ENCODE measurements at regions of chr14 and their contacts with region 1.

Region 1: DNA sequence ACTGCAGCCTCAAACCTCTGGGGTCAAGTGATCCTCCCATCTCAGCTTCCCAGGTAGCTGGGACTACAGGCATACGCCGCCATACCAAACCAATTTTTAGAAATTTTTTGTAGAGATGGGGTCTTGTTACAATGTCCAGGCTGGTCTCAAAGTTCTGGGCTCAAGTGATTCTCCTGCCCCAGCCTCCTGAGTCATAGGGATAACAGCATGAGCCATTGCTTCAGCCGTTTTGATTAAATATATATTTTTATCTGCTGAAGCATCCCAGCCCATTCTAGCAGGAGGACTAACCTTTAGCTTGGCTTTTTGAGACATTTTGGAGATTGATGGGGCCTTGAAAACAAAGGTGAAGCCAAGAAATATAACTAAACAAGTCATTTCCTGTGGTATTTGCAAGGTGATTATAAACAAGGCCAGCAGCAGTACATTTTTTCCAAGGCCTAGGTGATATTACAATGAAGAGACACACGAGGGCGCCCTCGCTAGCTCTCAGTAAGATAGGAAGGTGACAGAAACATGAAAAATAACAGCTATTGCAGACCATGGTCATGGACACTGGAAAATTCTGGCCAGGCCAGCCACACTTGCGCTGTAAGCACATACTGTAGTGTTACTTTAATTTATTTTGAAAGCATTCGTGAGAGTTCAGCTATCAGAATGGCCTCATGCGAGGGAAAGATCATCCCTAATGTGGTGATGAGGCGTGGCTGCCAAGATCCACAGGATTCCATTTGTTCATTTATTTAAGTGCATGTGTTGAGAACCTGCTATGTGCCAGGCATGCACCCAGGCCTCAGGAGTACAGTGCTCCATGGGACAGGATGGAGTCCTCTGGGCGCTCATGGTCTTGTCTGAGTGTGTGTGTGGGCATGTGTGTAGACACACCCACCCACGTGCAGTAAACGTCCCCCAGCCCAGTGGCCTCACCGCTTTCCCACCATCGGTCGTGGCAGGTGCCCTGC is 63.5 kb downstream of the DGLUCY start:
- DNase-seq: peak in 1 of 2 experiments; percentile 66
- H3K4me3 ChIP-seq: no peak overlapping the region
- H3K27ac ChIP-seq: no peak overlapping the region
- H3K4me1 ChIP-seq: no peaks in the 10 kb centered on the region; a peak in 2 of 7 replicates
- H3K27me3 ChIP-seq: no peaks in the 10 kb centered on the region
- CTCF ChIP-seq: peak in 2 of 3 experiments; percentile 63 to 72; a peak in 3 of 4 replicates
- EP300 ChIP-seq: no peak
- POLR2A ChIP-seq: no peak
- RAD21 ChIP-seq: peak; percentile 71 to 81

Region 2: GRCh38 chr14:91098591-91098990 is 78.8 kb before region 1 on chr14:
- CTCF ChIA-PET with region 1: interaction called, 11 read pairs
- POLR2A ChIA-PET with region 1: no interaction called
- DNase-seq: no peak
- H3K4me3 ChIP-seq: no peak overlapping the region
- H3K27ac ChIP-seq: no peak overlapping the region
- H3K4me1 ChIP-seq: no peaks in the 10 kb centered on the region
- H3K27me3 ChIP-seq: no peaks in the 10 kb centered on the region
- CTCF ChIP-seq: no peak
- EP300 ChIP-seq: no peak
- POLR2A ChIP-seq: no peak
- RAD21 ChIP-seq: no peak

Region 3: DNA sequence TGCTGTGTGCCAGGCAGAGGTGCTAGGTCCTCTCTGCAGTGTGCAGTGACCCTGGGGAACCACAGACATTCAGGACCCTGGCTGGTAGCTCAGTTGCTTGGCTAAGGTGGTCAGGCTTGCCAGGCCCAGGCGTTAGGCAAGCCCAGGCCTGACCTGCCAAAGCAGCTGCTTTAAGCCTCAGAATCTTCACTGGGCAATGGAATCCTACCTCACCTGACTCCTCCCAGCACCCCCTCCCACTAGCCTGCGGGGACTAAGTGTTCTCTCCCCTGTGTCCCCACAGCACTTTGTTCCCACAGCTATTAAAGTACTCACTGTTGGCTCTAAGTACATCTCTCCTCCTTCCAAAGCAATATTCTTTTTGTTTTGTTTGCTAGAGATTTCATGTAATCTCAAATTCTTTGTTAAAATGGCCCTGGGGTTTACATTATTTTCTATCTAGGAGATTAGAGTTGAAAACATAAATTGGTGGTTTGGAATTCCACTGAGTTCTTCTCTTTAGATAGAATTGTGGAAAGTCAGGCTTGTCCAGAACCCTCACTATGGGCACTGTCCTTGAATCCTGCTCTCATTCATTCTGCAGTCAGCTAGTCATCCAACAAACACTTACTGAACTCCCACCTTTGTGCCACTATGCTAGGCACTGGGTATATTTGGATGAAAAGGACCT is 19.1 kb before region 1 on chr14:
- CTCF ChIA-PET with region 1: interaction called, 43 read pairs
- POLR2A ChIA-PET with region 1: no interaction called
- DNase-seq: no peak
- H3K4me3 ChIP-seq: no peak overlapping the region
- H3K27ac ChIP-seq: no peak overlapping the region
- H3K4me1 ChIP-seq: no peaks in the 10 kb centered on the region
- H3K27me3 ChIP-seq: no peaks in the 10 kb centered on the region
- CTCF ChIP-seq: no peak
- EP300 ChIP-seq: no peak
- POLR2A ChIP-seq: no peak
- RAD21 ChIP-seq: no peak

Region 4: DNA sequence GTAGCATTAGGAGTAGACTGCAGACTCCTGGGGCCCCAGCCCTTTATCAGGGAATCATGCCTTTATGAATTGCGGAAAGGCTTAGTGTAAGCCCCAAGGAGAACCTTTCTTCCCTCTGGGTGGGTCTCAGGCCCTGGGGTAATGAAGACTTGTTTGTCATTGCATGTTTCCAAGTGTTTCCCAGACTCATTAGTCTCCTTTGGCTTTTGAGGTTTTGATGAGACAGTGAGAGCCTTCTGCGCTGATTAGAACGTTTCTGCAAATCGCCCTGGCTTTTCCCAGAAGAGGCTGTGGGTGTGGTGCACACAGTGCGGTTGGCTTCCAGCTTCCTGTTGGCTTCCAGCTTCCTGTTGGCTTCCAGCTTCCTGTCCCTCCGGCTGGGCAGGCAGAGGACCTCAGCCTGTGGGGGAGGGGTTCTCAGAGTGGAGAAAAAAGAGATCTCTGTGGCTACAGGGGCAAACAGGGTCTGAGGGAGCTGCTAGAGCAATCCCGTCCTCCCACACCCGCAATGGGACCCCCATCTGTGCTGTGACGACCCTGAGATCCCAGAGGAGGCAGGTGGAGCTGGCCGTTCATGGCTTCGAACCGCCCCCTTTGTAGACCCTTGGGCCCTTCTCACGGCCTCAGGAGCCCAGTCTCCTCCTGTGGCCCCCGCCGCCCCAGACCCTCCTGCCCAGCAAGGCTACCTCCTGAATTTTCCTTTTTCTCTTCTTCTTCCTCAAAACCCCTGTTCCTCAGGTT is 25.1 kb after region 1 on chr14:
- CTCF ChIA-PET with region 1: interaction called, 14 read pairs
- POLR2A ChIA-PET with region 1: no interaction called
- DNase-seq: no peak
- H3K4me3 ChIP-seq: no peak overlapping the region
- H3K27ac ChIP-seq: no peak overlapping the region
- H3K4me1 ChIP-seq: no peaks in the 10 kb centered on the region
- H3K27me3 ChIP-seq: no peaks in the 10 kb centered on the region
- CTCF ChIP-seq: no peak
- EP300 ChIP-seq: no peak
- POLR2A ChIP-seq: no peak
- RAD21 ChIP-seq: no peak

Region 5: GRCh38 chr14:91264151-91265150 is 87.1 kb after region 1 on chr14:
- CTCF ChIA-PET with region 1: interaction called, 57 read pairs
- POLR2A ChIA-PET with region 1: no interaction called
- DNase-seq: peak in 1 of 2 experiments; percentile 71
- H3K4me3 ChIP-seq: peak overlapping the region; percentile 39 to 64 (median 54)
- H3K27ac ChIP-seq: no peak overlapping the region
- H3K4me1 ChIP-seq: peaks cover 0 to 6% (median 1%) of the 10 kb centered on the region in 4 experiments; a peak in 6 of 7 replicates
- H3K27me3 ChIP-seq: peaks cover 0 to 27% (median 21%) of the 10 kb centered on the region in 4 experiments; a peak in 6 of 7 replicates
- CTCF ChIP-seq: no peak
- EP300 ChIP-seq: no peak
- POLR2A ChIP-seq: no peak
- RAD21 ChIP-seq: no peak

Region 6: DNA sequence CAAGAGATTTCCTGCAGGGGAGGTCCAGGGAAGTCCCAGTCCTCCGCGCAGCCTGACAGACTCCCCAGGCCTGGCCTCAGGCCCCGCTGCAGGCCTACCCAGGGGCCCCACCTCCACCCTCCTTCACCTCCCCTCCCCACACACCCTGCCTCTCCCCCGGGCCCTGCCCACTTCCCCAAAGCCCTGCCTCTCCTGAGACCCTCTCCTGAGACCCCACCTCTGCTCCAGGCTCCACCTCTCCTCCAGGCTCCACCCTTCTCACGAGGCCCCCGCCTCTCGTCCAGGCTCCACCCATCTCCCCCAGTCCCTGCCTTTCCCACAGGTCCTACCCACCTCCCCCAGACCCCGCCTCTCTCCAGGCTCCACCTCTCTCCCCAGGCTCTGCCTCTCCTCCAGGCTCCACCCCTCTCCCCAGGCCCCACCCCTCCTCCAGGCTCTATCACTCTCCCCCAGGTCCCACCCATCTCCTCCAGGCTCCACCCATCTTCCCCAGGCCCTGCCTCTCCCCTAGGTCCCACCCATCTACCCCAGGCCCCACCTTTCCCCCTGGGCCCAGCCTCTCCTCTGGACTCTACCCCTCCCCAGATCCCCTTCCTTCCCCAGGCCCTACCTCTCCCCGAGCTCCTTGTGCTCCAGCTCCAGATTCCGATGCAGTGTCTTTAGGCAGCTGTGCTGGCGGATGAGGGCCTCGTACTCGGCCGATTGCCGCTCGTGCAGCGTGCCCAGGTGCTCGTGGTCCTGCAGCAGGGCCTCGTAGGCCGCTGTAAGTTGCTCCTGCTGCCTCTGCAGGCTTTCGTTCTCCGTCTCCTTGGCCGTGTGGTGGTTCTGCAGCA is 126.0 kb after region 1 on chr14:
- CTCF ChIA-PET with region 1: no interaction called
- POLR2A ChIA-PET with region 1: no interaction called
- DNase-seq: peak; percentile 98 to 100
- H3K4me3 ChIP-seq: peak overlapping the region in 1 of 4 experiments; percentile 45; a peak in 4 of 8 replicates
- H3K27ac ChIP-seq: no peak overlapping the region; the same call in 1 of the 2 replicates
- H3K4me1 ChIP-seq: peaks cover 7 to 31% (median 23%) of the 10 kb centered on the region in 4 experiments; a peak in 6 of 7 replicates
- H3K27me3 ChIP-seq: no peaks in the 10 kb centered on the region
- CTCF ChIP-seq: no peak
- EP300 ChIP-seq: no peak
- POLR2A ChIP-seq: peak in 1 of 2 experiments; percentile 54; a peak in 1 of 3 replicates
- RAD21 ChIP-seq: no peak

Measured in H1 (cell line).